ENCODE measurements at regions of chr4 and their contacts with region 1.

Region 1: GRCh38 chr4:37603070-37603468 is 83.1 kb downstream of the RELL1 start:
- DNase-seq: peak; percentile 60 to 96
- H3K4me3 ChIP-seq: no peak overlapping the region
- H3K27ac ChIP-seq: no peak overlapping the region
- H3K4me1 ChIP-seq: peaks cover 0 to 3% (median 1%) of the 10 kb centered on the region in 4 experiments; a peak in 4 of 7 replicates
- H3K27me3 ChIP-seq: no peaks in the 10 kb centered on the region; a peak in 1 of 7 replicates
- CTCF ChIP-seq: peak; percentile 92 to 95 (median 95)
- EP300 ChIP-seq: no peak
- POLR2A ChIP-seq: no peak
- RAD21 ChIP-seq: peak; percentile 94 to 95

Region 2: GRCh38 chr4:37516057-37516775 is 86.9 kb before region 1 on chr4:
- CTCF ChIA-PET with region 1: no interaction called
- POLR2A ChIA-PET with region 1: no interaction called
- DNase-seq: no peak
- H3K4me3 ChIP-seq: no peak overlapping the region
- H3K27ac ChIP-seq: no peak overlapping the region
- H3K4me1 ChIP-seq: peaks cover 0 to 3% (median 0%) of the 10 kb centered on the region in 4 experiments; a peak in 1 of 7 replicates
- H3K27me3 ChIP-seq: no peaks in the 10 kb centered on the region
- CTCF ChIP-seq: no peak
- EP300 ChIP-seq: no peak
- POLR2A ChIP-seq: no peak
- RAD21 ChIP-seq: no peak

Region 3: DNA sequence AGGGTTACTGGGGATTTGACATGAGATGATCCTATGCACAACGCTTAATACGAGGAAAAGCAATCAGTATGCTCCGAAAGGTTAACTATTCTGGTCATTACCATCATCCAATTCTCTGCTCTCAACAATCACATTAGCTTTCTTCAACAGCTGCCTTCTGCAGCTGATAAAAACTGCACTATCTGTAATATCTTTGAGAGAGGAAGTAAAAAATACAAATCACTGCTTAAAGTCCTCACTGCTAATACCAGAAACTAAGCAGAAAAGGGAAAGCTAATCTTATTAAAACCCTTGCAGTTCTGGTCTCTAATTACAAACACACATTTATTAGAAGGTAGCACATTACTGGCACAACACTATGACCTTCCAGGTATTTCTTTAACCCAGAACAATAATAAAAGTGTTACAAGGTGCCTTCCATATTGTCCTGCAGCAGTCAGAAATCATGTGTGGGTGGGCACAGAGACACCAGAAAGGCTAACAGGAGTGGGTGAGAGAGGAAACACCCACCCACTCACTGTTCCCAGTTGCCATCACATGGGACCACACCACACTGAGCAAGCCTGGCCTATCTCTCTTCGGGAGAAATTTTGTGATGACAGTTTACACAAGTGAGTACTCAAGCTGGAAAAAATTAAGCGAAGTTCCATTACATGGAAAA is 12.1 kb after region 1 on chr4:
- CTCF ChIA-PET with region 1: interaction called, 26 read pairs
- POLR2A ChIA-PET with region 1: no interaction called
- DNase-seq: no peak
- H3K4me3 ChIP-seq: no peak overlapping the region
- H3K27ac ChIP-seq: no peak overlapping the region
- H3K4me1 ChIP-seq: no peaks in the 10 kb centered on the region
- H3K27me3 ChIP-seq: no peaks in the 10 kb centered on the region
- CTCF ChIP-seq: no peak
- EP300 ChIP-seq: no peak
- POLR2A ChIP-seq: no peak
- RAD21 ChIP-seq: no peak

Region 4: GRCh38 chr4:37653601-37654000 is 50.5 kb after region 1 on chr4:
- CTCF ChIA-PET with region 1: interaction called, 15 read pairs
- POLR2A ChIA-PET with region 1: no interaction called
- DNase-seq: no peak
- H3K4me3 ChIP-seq: no peak overlapping the region
- H3K27ac ChIP-seq: no peak overlapping the region
- H3K4me1 ChIP-seq: peaks cover 0 to 8% (median 6%) of the 10 kb centered on the region in 4 experiments; a peak in 4 of 7 replicates
- H3K27me3 ChIP-seq: no peaks in the 10 kb centered on the region; a peak in 1 of 7 replicates
- CTCF ChIP-seq: no peak
- EP300 ChIP-seq: no peak
- POLR2A ChIP-seq: no peak
- RAD21 ChIP-seq: no peak

Region 5: DNA sequence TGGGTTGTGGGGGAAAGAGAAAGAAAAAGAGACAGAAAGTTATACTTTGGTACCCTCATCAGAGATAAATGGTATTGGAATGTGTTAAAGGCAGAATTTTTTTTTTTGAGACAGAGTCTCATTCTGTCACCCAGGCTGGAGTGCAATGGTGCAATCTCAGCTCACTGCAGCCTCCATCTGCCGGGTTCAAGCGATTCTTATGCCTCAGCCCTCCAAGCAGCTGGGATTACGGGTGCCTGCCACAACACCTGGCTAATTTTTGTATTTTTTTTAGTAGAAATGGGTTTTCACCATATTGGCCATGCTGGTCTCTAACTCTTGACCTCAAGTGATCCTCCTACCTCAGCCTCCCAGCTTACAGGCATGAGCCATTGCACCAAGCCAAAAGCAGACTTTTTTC is 94.5 kb after region 1 on chr4:
- CTCF ChIA-PET with region 1: interaction called, 12 read pairs
- POLR2A ChIA-PET with region 1: no interaction called
- DNase-seq: no peak
- H3K4me3 ChIP-seq: no peak overlapping the region
- H3K27ac ChIP-seq: no peak overlapping the region
- H3K4me1 ChIP-seq: no peaks in the 10 kb centered on the region
- H3K27me3 ChIP-seq: no peaks in the 10 kb centered on the region
- CTCF ChIP-seq: no peak
- EP300 ChIP-seq: no peak
- POLR2A ChIP-seq: no peak
- RAD21 ChIP-seq: no peak

Region 6: GRCh38 chr4:37795581-37796195 is 192.6 kb after region 1 on chr4:
- CTCF ChIA-PET with region 1: interaction called, 60 read pairs
- POLR2A ChIA-PET with region 1: no interaction called
- DNase-seq: no peak
- H3K4me3 ChIP-seq: no peak overlapping the region
- H3K27ac ChIP-seq: no peak overlapping the region
- H3K4me1 ChIP-seq: no peaks in the 10 kb centered on the region
- H3K27me3 ChIP-seq: no peaks in the 10 kb centered on the region
- CTCF ChIP-seq: no peak
- EP300 ChIP-seq: no peak
- POLR2A ChIP-seq: no peak
- RAD21 ChIP-seq: no peak